ENCODE measurements at regions of chr15 and their contacts with region 1.

Region 1: DNA sequence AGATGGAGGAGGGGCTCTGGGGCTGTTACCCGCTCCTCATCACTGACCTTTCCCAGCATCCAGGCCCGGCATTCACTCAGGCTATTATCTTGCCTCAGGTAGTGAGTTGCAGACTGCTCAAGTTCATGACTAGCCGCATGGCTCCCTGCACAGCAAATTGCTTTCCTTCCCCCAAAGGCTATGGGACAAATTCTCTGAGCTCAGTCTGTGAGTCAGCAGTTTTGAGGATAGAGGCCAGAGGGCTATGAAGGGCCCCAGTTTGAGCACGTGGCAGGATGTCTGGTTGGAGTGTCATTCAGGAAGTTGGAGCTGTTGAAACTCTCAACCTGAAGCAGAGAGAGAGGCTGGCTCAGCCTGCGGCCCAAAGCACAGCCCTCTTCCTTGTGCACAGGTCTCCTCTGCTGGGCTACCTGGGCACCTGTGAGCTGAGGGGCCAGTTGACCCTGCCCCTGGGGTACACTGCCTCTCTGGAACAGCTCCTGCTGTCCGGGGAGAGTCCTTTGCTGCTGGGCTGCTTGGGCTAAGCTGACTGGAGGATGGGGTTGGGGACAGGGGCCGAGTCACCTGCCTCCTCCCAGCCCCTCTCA is 7.9 kb downstream of the FAH start:
- DNase-seq: peak; percentile 81
- H3K4me3 Mint-ChIP-seq: no peak overlapping the region
- H3K27ac Mint-ChIP-seq: peak overlapping the region; percentile 74
- H3K4me1 Mint-ChIP-seq: peaks cover 22% of the 10 kb centered on the region
- H3K27me3 Mint-ChIP-seq: no peaks in the 10 kb centered on the region

Region 2: DNA sequence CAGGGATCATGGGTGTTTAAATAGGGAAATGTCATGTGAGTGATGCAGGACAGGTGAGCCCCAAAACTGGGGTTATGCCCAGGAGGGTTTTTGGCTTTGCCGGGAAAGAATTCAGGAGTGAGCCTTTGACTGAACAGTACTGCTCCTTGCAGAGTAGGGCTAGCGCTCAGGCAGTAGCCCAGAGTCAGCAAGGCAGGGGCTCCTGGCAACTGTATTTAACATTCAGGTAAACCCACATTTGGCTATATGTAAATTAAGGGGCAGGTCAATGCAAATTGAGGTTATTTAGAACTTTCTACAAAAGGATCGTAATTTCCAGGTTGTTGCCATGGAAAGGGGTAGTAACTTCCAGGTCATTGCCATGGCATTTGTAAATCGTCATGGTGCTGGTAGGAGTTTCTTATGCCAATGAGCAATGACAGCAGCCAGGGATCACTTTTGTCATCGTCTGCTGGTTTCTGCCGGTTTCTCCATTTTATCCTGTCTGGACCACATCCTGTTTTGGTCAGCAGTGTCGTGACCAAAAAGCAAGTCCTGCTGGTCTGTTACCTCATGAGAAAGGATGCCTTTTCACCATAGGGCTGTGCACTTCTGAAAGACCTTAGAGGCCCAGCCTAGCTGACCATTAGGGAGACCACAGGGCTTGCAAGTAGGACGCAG is 288.2 kb before region 1 on chr15:
- CTCF ChIA-PET with region 1: no interaction called
- POLR2A ChIA-PET with region 1: no interaction called
- intact Hi-C with region 1: no loop called
- DNase-seq: peak; percentile 62
- H3K4me3 Mint-ChIP-seq: no peak overlapping the region
- H3K27ac Mint-ChIP-seq: no peak overlapping the region
- H3K4me1 Mint-ChIP-seq: peaks cover 23% of the 10 kb centered on the region
- H3K27me3 Mint-ChIP-seq: no peaks in the 10 kb centered on the region

Region 3: GRCh38 chr15:80031841-80032240 is 128.8 kb before region 1 on chr15:
- CTCF ChIA-PET with region 1: no interaction called
- POLR2A ChIA-PET with region 1: no interaction called
- intact Hi-C with region 1: loop called (anchors 1 kb)
- DNase-seq: peak; percentile 69
- H3K4me3 Mint-ChIP-seq: no peak overlapping the region
- H3K27ac Mint-ChIP-seq: peak overlapping the region; percentile 76
- H3K4me1 Mint-ChIP-seq: peaks cover 26% of the 10 kb centered on the region
- H3K27me3 Mint-ChIP-seq: no peaks in the 10 kb centered on the region

Region 4: GRCh38 chr15:80173022-80173759 is 12.5 kb after region 1 on chr15:
- CTCF ChIA-PET with region 1: interaction called, 10 read pairs
- POLR2A ChIA-PET with region 1: interaction called, 9 read pairs
- intact Hi-C with region 1: no loop called
- DNase-seq: peak; percentile 84
- H3K4me3 Mint-ChIP-seq: no peak overlapping the region
- H3K27ac Mint-ChIP-seq: no peak overlapping the region
- H3K4me1 Mint-ChIP-seq: no peaks in the 10 kb centered on the region
- H3K27me3 Mint-ChIP-seq: no peaks in the 10 kb centered on the region

Measured in activated CD4-positive, alpha-beta memory T cell treated with anti-CD3 and anti-CD28 coated beads for 36 hours (primary cell).